A673 (cell line): ENCODE measurements at regions of chr2 and their contacts with region 1.

Region 1: GRCh38 chr2:3959372-3959771 is 256.0 kb downstream of the DCDC2C start:
- DNase-seq: peak; percentile 58
- H3K4me3 ChIP-seq: no peak overlapping the region
- H3K27ac ChIP-seq: peak overlapping the region; percentile 78
- H3K4me1 ChIP-seq: peaks cover 70% of the 10 kb centered on the region
- H3K27me3 ChIP-seq: no peaks in the 10 kb centered on the region
- CTCF ChIP-seq: peak; percentile 89

Region 2: GRCh38 chr2:4151521-4151920 is 192.1 kb after region 1 on chr2:
- CTCF ChIA-PET with region 1: interaction called, 5 read pairs
- POLR2A ChIA-PET with region 1: no interaction called
- intact Hi-C with region 1: loop called (anchors 1 kb)
- DNase-seq: peak; percentile 94
- H3K4me3 ChIP-seq: no peak overlapping the region
- H3K27ac ChIP-seq: peak overlapping the region; percentile 96
- H3K4me1 ChIP-seq: peaks cover 31% of the 10 kb centered on the region
- H3K27me3 ChIP-seq: no peaks in the 10 kb centered on the region
- CTCF ChIP-seq: no peak

Region 3: GRCh38 chr2:4180631-4181030 is 221.3 kb after region 1 on chr2:
- CTCF ChIA-PET with region 1: no interaction called
- POLR2A ChIA-PET with region 1: no interaction called
- intact Hi-C with region 1: no loop called
- DNase-seq: no peak
- H3K4me3 ChIP-seq: no peak overlapping the region
- H3K27ac ChIP-seq: no peak overlapping the region
- H3K4me1 ChIP-seq: no peaks in the 10 kb centered on the region
- H3K27me3 ChIP-seq: no peaks in the 10 kb centered on the region
- CTCF ChIP-seq: no peak

Region 4: DNA sequence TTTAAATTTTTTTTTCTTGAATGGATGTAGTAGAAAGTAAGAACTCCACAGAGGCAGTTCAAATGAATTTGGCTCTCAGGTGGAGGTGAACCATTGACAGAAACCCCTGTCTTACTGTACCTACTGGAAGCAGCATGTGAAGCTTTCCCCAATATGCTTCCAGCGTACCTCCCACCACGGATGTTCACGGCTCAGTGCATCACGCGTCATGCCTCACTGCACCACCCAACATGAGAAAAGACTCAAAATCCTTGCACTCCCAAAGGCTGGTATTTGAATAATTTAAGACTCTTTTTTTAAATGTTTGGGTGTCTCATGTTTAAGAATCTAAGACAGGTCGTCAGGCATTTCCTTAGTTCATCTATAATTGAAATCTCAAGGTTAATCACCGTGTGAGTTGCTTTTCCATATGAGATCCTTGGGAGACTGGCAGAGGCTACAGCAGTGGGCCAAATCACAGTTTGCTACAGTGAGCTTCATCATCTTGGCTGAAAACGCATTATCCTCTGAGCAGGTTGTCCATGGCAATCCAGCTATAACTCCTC is 590.4 kb after region 1 on chr2:
- CTCF ChIA-PET with region 1: interaction called, 14 read pairs
- POLR2A ChIA-PET with region 1: no interaction called
- intact Hi-C with region 1: no loop called
- DNase-seq: no peak
- H3K4me3 ChIP-seq: no peak overlapping the region
- H3K27ac ChIP-seq: no peak overlapping the region
- H3K4me1 ChIP-seq: no peaks in the 10 kb centered on the region
- H3K27me3 ChIP-seq: no peaks in the 10 kb centered on the region
- CTCF ChIP-seq: no peak

Region 5: GRCh38 chr2:4715069-4715468 is 755.7 kb after region 1 on chr2:
- CTCF ChIA-PET with region 1: interaction called, 13 read pairs
- POLR2A ChIA-PET with region 1: no interaction called
- intact Hi-C with region 1: loop called (anchors 2 kb)
- DNase-seq: peak; percentile 72
- H3K4me3 ChIP-seq: no peak overlapping the region
- H3K27ac ChIP-seq: peak overlapping the region; percentile 22
- H3K4me1 ChIP-seq: no peaks in the 10 kb centered on the region
- H3K27me3 ChIP-seq: no peaks in the 10 kb centered on the region
- CTCF ChIP-seq: peak; percentile 57

Region 6: DNA sequence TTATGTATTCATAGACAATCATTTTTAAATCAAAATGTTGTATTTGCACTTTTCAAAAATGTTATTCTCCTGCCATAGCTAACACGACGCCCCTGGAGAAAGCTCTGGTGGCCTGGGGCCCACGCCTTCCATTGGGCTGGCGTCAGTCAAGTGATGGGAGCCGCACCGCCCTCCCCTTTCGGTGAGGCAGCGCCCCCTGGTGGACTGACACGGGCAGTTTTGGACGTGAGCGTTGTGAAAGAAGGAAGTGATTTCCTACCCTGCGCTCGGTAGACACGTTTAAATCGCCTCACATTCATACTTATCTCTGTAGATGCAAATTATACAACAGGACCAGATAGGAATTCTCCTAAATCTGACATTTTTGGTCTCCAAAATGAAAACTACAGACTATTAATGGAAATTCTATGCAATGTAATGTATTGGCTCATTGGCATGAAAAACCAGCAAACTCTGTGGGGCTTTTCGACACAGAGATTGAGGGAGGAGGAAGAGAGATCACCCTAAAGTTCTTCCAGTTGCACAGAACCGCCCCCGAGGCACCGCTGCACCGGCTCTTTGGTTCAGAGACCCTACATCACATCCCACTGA is 1406.6 kb after region 1 on chr2:
- CTCF ChIA-PET with region 1: interaction called, 7 read pairs
- POLR2A ChIA-PET with region 1: no interaction called
- intact Hi-C with region 1: loop called (anchors 10 kb)
- DNase-seq: peak; percentile 92
- H3K4me3 ChIP-seq: no peak overlapping the region
- H3K27ac ChIP-seq: no peak overlapping the region
- H3K4me1 ChIP-seq: peaks cover 4% of the 10 kb centered on the region
- H3K27me3 ChIP-seq: no peaks in the 10 kb centered on the region
- CTCF ChIP-seq: peak; percentile 96

Region 7: GRCh38 chr2:5691975-5692529 is 1732.7 kb after region 1 on chr2 and contains the start of gene SOX11:
- CTCF ChIA-PET with region 1: no interaction called
- POLR2A ChIA-PET with region 1: no interaction called
- intact Hi-C with region 1: loop called (anchors 10 kb)
- DNase-seq: peak; percentile 96
- H3K4me3 ChIP-seq: peak within 1 kb of the TSS; percentile 86
- H3K27ac ChIP-seq: peak within 1 kb of the TSS; percentile 91
- H3K4me1 ChIP-seq: no peaks in the 10 kb centered on the region
- H3K27me3 ChIP-seq: no peaks in the 10 kb centered on the region
- CTCF ChIP-seq: no peak
- total RNA-seq, gene SOX11: 73.9 and 75.1 TPM in 2 replicates